Psoas muscle (tissue), 8 donors: ENCODE measurements at regions of chr10 and their contacts with region 1.

Region 1: DNA sequence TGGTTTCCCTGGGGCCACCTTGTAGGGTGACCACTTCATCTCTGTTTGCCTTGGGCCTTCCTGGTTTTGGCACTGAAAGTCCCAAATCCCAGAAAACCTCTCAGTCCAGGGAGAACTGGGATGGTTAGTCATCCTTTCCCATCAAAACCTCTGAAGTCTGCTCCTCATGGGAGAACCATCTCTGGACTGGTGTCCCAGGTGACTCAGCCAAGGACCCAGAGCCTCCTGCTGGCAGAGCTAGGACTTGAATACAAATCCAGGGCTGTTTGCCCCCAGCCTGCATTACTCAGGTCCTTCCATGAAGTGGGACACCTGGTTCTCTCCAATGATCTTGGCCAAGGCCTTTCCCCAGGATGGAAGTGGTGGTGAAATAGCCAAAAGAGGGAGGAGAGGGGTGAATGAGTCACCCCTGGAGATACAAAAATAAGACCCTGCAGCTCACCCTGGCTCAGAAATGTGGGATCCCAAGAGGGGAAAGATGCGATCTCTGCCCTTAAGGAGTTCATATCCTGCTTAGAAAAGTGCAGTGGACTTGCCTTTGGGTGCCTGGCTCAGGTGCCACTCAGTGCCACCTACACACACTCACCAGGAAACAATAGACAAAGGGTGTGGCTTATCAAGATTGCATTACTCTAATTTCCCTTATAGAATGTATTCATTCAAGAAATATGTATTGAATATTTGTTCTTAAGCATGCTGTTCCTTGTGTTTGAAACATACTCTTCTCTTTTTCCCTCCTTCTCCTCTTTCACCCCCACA is 22.0 kb downstream of the ADRA2A start:
- DNase-seq: no peak
- ATAC-seq: no peak
- H3K4me3 ChIP-seq: no peak overlapping the region
- H3K27ac ChIP-seq: no peak overlapping the region
- H3K4me1 ChIP-seq: no peaks in the 10 kb centered on the region
- H3K27me3 ChIP-seq: peaks cover 0 to 26% (median 4%) of the 10 kb centered on the region in 3 donors
- CTCF ChIP-seq: no peak

Region 2: DNA sequence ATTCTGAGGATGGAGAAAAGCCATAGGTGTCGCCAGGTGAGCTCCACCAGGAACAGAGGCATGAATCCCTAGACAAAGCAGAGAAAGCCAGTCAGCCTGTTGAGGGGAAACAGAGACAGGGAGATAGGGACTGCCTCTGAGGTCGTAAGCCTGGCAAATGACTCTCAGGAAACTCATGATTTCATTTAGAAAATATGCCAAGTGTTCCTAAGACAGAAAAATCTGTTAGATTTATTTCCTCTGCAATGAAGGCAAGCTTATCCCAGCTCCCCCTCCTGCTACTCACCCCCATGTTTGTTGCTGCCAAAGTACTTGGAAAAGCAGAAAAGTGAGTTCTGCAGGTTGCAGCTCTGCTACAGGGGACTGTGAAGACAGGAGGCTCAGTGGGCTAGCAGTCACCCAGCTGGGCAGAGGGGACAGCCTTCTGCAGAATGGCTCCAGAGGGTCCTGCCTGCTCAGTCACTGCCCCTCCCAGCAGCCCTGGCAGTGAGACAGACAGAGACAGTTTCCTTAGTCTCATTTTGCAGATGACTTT is 162.3 kb after region 1 on chr10:
- intact Hi-C with region 1: loop called in 1 of 2 experiments (anchors 5 kb)
- DNase-seq: no peak
- ATAC-seq: no peak
- H3K4me3 ChIP-seq: no peak overlapping the region
- H3K27ac ChIP-seq: no peak overlapping the region
- H3K4me1 ChIP-seq: no peaks in the 10 kb centered on the region
- H3K27me3 ChIP-seq: no peaks in the 10 kb centered on the region
- CTCF ChIP-seq: no peak